ENCODE measurements at regions of chr6 and their contacts with region 1.

Region 1: DNA sequence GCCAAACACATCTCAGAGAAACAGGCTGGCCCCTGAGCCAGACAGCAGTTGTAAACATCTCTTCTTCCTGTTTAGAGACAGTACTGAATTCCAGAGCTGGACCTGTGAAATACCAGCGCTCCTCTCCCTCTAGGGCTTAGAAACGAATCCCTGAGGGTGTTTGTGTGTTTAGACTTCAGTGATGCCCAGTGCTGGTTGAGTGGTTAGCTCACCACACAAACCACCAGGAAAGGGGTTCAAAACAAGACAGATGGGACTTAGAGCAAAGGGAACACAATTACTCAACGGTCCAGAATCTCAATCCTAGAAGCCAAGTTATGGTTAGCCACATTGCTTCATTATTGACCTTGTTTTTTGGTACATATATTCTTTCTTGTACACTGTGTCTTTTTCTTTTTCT is 108.7 kb upstream of the TMEM170B start:
- DNase-seq: no peak
- H3K4me3 ChIP-seq: no peak overlapping the region
- H3K27ac ChIP-seq: no peak overlapping the region
- H3K4me1 ChIP-seq: peaks cover 33% of the 10 kb centered on the region
- H3K27me3 ChIP-seq: no peaks in the 10 kb centered on the region
- CTCF ChIP-seq: no peak

Region 2: GRCh38 chr6:10901770-10902169 is 527.1 kb before region 1 on chr6:
- CTCF ChIA-PET with region 1: no interaction called
- dilution Hi-C with region 1: no loop called
- in situ Hi-C with region 1: no loop called
- intact Hi-C with region 1: no loop called
- DNase-seq: no peak
- H3K4me3 ChIP-seq: no peak overlapping the region
- H3K27ac ChIP-seq: no peak overlapping the region
- H3K4me1 ChIP-seq: no peaks in the 10 kb centered on the region
- H3K27me3 ChIP-seq: no peaks in the 10 kb centered on the region
- CTCF ChIP-seq: no peak

Region 3: GRCh38 chr6:11374036-11375010 is 54.6 kb before region 1 on chr6:
- CTCF ChIA-PET with region 1: no interaction called
- dilution Hi-C with region 1: loop called (anchors 5 kb)
- in situ Hi-C with region 1: no loop called
- intact Hi-C with region 1: no loop called
- DNase-seq: no peak
- H3K4me3 ChIP-seq: no peak overlapping the region
- H3K27ac ChIP-seq: no peak overlapping the region
- H3K4me1 ChIP-seq: peaks cover 2% of the 10 kb centered on the region
- H3K27me3 ChIP-seq: no peaks in the 10 kb centered on the region
- CTCF ChIP-seq: no peak

Measured in mammary epithelial cell (primary cell).